Activated T-helper 1 cell treated with anti-CD3 and anti-CD28 coated beads, Interleukin-12 subunit alpha, Interleukin-12 subunit beta, Interleukin-2, Interleukin-4 antibody, amounts not matched to agents 30 ng/mL and 10 ng/mL and 1 ng/mL, durations not matched to agents 14 hours and 24 hours and 36 hours (primary cell): ENCODE measurements at regions of chr11 and their contacts with region 1.

Region 1: GRCh38 chr11:88337181-88337986 is at the start of gene CTSC:
- DNase-seq: peak; percentile 91
- H3K4me3 Mint-ChIP-seq: peak within 1 kb of the TSS; percentile 90
- H3K27ac Mint-ChIP-seq: peak within 1 kb of the TSS; percentile 94
- H3K4me1 Mint-ChIP-seq: peaks cover 68% of the 10 kb centered on the region
- H3K27me3 Mint-ChIP-seq: no peaks in the 10 kb centered on the region
- total RNA-seq, gene CTSC: 99.4 and 99.6 TPM in 2 replicates

Region 2: DNA sequence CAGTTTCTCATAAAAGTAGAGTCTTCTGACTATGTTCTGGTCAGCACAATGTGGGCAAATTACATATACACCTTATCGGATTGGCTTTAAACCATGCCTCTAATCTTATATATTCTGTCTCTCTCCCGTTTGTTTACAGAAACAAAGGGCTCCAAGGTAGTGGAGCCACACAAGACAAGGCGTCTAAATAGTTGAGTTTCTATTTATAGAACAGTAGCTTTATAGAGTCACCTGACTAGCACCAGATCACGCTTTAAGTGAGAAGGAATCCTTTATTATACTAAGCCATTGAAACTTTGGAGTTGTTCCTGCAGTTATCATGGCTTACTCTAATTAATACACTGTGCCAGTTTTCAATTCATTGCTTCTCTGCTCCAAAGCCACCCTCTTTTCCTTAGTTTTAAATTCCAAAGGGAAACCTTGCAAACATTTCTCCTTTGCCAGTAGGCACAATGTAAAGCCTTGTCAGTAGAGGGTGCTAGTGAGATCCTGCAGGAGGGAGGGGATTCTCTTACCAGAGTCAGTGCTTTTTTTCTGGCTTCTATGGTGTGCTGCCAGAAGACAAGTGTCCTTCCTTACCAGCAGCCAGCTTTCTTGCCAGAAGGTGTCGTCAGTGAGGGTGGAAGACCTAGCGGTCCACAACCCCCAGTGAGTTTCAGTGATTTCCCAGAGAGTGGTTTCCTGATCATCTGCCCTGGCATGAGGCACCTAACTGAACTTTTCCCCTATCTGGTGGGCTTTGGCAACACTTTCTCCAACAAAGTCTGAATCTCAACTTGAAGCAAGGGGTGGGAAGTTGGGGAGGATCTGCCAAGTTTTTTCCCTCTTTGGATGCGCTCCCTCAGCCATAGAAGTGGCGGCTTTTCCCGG is 233.8 kb before region 1 on chr11:
- intact Hi-C with region 1: loop called (anchors 1 kb)
- DNase-seq: peak; percentile 16
- H3K4me3 Mint-ChIP-seq: no peak overlapping the region
- H3K27ac Mint-ChIP-seq: no peak overlapping the region
- H3K4me1 Mint-ChIP-seq: no peaks in the 10 kb centered on the region
- H3K27me3 Mint-ChIP-seq: peaks cover 16% of the 10 kb centered on the region

Region 3: GRCh38 chr11:88179971-88180629 is 157.3 kb before region 1 on chr11:
- intact Hi-C with region 1: loop called (anchors 1 kb)
- DNase-seq: no peak
- H3K4me3 Mint-ChIP-seq: no peak overlapping the region
- H3K27ac Mint-ChIP-seq: no peak overlapping the region
- H3K4me1 Mint-ChIP-seq: peaks cover 45% of the 10 kb centered on the region
- H3K27me3 Mint-ChIP-seq: peaks cover 14% of the 10 kb centered on the region

Region 4: GRCh38 chr11:88327061-88327460 is 10.3 kb before region 1 on chr11:
- intact Hi-C with region 1: loop called (anchors 1 kb)
- DNase-seq: no peak
- H3K4me3 Mint-ChIP-seq: no peak overlapping the region
- H3K27ac Mint-ChIP-seq: no peak overlapping the region
- H3K4me1 Mint-ChIP-seq: peaks cover 93% of the 10 kb centered on the region
- H3K27me3 Mint-ChIP-seq: no peaks in the 10 kb centered on the region

Region 5: GRCh38 chr11:88421530-88421929 is 84.1 kb after region 1 on chr11:
- intact Hi-C with region 1: loop called (anchors 1 kb)
- DNase-seq: peak; percentile 43
- H3K4me3 Mint-ChIP-seq: peak overlapping the region; percentile 67
- H3K27ac Mint-ChIP-seq: peak overlapping the region; percentile 90
- H3K4me1 Mint-ChIP-seq: peaks cover 69% of the 10 kb centered on the region
- H3K27me3 Mint-ChIP-seq: no peaks in the 10 kb centered on the region

Region 6: GRCh38 chr11:88535916-88536547 is 198.6 kb after region 1 on chr11:
- intact Hi-C with region 1: loop called (anchors 1 kb)
- DNase-seq: no peak
- H3K4me3 Mint-ChIP-seq: no peak overlapping the region
- H3K27ac Mint-ChIP-seq: peak overlapping the region; percentile 47
- H3K4me1 Mint-ChIP-seq: peaks cover 37% of the 10 kb centered on the region
- H3K27me3 Mint-ChIP-seq: peaks cover 9% of the 10 kb centered on the region

Region 7: DNA sequence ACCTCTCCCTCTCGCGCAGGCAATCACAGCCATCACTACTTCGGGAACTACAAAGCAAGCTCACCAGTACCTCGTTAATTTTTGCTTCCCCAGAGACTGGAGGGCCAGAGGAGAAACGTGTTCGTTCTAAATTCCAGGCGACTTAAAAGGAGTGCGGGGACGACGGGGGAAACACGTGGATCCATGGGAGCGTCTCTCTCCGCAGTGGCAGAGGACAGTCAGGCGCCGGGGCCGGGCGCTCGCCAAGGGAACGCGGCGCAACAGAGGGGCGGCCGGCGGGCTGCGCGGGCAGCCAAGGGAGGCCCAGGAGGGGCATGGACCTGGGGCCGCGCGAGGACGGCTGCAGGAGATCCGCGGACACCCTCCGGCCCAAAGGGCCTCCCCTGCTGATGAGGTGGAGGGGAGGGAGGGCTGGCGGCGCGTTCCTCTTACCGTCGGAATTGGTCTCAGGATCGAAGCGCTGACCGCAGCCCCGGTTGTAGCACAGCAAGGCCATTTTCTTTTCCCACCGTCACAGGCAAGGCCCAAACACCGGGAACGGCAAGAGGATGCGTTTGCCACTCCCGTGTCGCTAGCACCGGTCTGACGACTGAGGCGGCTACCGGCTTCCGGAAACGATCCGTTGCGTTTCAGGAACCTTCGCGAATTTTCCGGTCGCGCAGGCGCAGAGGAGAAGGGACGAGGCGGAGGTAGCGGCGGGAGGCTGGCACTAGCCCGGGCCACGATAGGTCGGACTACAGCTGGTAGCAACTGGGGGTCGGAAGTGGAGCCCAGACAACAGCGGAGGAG is 1885.3 kb after region 1 on chr11 and contains the start of gene CHORDC1:
- intact Hi-C with region 1: loop called (anchors 2 kb)
- DNase-seq: peak; percentile 93
- H3K4me3 Mint-ChIP-seq: peak within 1 kb of the TSS; percentile 97
- H3K27ac Mint-ChIP-seq: peak within 1 kb of the TSS; percentile 93
- H3K4me1 Mint-ChIP-seq: peaks cover 46% of the 10 kb centered on the region
- H3K27me3 Mint-ChIP-seq: peaks cover 4% of the 10 kb centered on the region
- total RNA-seq, gene CHORDC1: 128 and 130 TPM in 2 replicates